ENCODE measurements at regions of chr15 and their contacts with region 1.

Region 1: DNA sequence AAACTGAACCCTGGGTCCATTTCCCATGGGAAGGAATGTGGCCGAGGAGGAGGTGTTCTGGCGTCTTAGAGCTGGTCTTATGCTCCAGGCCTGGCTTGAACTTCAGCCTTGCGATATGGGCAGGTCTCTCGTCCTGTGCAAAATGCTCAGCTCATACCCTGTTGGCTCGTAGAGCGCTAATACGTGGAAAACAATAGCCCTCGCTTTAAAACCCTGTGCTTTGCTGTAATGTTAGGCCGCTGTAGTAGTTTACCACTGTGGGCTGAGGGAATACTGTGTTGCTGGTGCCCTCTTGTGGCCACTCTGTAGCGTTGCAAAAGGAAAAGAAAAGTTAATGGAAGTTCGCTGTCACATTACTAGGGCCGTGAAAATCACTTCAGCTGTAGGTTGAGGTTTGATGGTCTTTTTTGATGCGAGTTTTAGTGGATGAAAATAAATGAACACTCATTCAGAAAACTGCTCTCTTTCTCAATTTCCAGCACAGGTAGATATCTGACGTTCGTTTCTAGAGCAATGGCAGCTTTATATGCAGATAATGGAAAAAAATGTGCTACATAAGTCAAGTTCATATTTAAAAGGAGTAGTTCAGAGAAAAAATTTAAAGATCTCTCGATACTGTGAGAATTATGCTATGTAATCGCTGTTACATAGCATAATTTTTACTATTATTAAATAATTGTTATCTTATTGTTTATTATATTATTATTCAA is 92.9 kb downstream of the MCTP2 start:
- DNase-seq: no peak
- ATAC-seq: peak; percentile 94

Region 2: GRCh38 chr15:94163999-94164807 is 160.1 kb before region 1 on chr15:
- intact Hi-C with region 1: loop called (anchors 2 kb)
- DNase-seq: no peak
- ATAC-seq: peak; percentile 57

Region 3: DNA sequence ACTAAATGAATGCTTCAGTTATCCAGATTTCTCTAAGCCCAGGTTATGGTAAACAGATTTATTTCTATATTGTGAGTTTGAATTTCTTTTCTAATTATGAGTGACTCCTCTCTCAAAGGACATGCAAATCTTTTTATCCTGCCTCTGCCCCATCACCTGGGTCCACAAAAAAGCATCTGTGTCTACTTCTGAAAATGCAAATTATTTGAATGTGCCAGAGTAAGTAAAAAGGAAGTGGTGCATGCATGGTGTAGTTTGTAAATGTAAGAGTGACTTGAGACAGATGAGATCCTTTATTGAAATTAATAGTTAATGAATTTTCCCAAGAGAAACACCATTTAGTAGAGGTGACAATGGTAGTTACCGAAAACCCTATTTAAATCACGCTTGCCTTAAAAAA is 66.0 kb before region 1 on chr15:
- intact Hi-C with region 1: no loop called
- DNase-seq: no peak
- ATAC-seq: no peak

Measured in Right ventricle myocardium superior (tissue), 1 donor.